Activated T-helper 2 cell treated with anti-CD3 and anti-CD28 coated beads, Interferon-gamma antibody, Interleukin-2, Interleukin-4, amounts not matched to agents 10 μg/mL and 5 μg/mL and 100 μg/mL, durations not matched to agents 14 hours and 24 hours and 36 hours (primary cell): ENCODE measurements at regions of chr3 and their contacts with region 1.

Region 1: DNA sequence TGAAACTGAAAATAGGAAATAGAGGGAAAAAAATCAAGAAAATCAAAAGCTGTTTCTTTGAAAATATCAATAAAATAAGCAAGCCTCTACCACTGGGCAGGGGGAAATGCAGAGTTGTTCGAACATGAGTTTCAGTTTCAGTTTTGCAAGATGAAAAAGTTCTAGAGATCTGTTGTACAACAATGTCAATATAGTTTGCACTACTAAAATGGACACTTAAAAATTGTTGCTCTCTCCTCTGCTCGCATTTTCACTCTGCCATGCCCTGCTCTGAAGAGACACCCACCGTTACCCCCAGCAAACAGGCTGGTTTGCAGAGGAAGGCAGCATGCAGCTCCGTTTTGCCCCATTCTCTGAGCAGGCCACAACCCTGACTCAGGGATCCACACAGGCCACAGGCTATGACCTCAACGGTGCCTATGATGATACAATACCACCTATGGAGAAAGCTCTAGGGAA is 64.5 kb downstream of the ZNF148 start:
- DNase-seq: peak; percentile 43
- H3K4me3 Mint-ChIP-seq: peak overlapping the region; percentile 87
- H3K27ac Mint-ChIP-seq: peak overlapping the region; percentile 88
- H3K4me1 Mint-ChIP-seq: peaks cover 30% of the 10 kb centered on the region
- H3K27me3 Mint-ChIP-seq: no peaks in the 10 kb centered on the region

Region 2: DNA sequence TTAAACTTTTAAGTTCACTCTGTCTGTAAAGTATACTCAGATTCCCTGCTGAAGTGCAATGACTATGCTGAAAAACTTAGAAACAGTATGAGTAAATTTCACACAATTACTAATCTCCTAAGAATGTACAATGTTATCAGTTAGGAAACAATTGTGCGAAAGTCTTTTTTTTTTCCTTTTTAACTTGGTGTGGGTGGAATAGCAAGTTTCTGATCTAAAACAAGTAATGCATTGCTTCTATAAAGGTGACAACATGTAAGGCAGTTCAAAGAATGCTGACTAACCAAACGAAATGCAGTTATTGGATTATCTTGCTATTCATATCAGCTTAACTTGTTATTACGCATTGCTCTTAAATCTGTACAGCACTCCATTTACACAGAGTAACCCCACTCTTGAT is 78.8 kb before region 1 on chr3:
- intact Hi-C with region 1: loop called (anchors 1 kb)
- DNase-seq: no peak
- H3K4me3 Mint-ChIP-seq: no peak overlapping the region
- H3K27ac Mint-ChIP-seq: peak overlapping the region; percentile 60
- H3K4me1 Mint-ChIP-seq: peaks cover 18% of the 10 kb centered on the region
- H3K27me3 Mint-ChIP-seq: no peaks in the 10 kb centered on the region

Region 3: GRCh38 chr3:125271127-125271526 is 39.5 kb before region 1 on chr3:
- intact Hi-C with region 1: loop called (anchors 5 kb)
- DNase-seq: no peak
- H3K4me3 Mint-ChIP-seq: no peak overlapping the region
- H3K27ac Mint-ChIP-seq: no peak overlapping the region
- H3K4me1 Mint-ChIP-seq: peaks cover 16% of the 10 kb centered on the region
- H3K27me3 Mint-ChIP-seq: no peaks in the 10 kb centered on the region

Region 4: GRCh38 chr3:125281386-125281785 is 29.3 kb before region 1 on chr3:
- intact Hi-C with region 1: no loop called
- DNase-seq: no peak
- H3K4me3 Mint-ChIP-seq: no peak overlapping the region
- H3K27ac Mint-ChIP-seq: no peak overlapping the region
- H3K4me1 Mint-ChIP-seq: peaks cover 4% of the 10 kb centered on the region
- H3K27me3 Mint-ChIP-seq: no peaks in the 10 kb centered on the region

Region 5: DNA sequence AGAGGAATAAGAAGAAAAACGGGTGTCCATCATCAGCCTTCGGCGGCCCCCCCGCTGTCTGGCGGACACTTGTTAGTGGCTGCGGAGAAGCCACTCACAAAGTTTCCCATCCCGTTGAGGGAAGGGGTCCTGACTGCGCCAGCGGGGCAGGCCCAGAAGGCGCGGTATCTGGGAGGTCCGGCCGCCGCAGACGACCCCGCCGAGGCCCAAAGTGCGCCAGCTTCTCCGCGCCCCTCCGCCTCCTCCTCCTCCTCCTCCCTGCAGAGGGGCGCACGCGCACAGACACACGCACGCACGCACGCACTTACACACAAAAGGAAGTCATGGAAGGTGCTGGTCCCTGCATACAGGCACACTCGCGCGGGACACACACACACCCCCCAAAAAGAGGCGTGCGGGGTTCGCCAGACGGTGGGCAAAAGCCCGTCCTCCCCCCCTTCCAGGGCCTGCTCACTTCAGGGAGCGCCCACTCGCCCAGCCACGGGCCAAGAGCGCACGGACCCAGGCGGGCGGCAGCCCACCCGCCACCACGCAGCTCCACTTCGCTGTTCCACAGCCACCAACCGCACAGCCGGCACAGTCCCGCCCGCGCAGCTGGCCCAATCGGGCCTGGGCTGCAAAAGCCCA is 46.5 kb after region 1 on chr3:
- intact Hi-C with region 1: loop called (anchors 5 kb)
- DNase-seq: peak; percentile 36
- H3K4me3 Mint-ChIP-seq: peak overlapping the region; percentile 78
- H3K27ac Mint-ChIP-seq: peak overlapping the region; percentile 66
- H3K4me1 Mint-ChIP-seq: peaks cover 43% of the 10 kb centered on the region
- H3K27me3 Mint-ChIP-seq: no peaks in the 10 kb centered on the region

Region 6: GRCh38 chr3:125381743-125382142 is 71.1 kb after region 1 on chr3:
- intact Hi-C with region 1: loop called (anchors 2 kb)
- DNase-seq: peak; percentile 23
- H3K4me3 Mint-ChIP-seq: no peak overlapping the region
- H3K27ac Mint-ChIP-seq: peak overlapping the region; percentile 42
- H3K4me1 Mint-ChIP-seq: peaks cover 16% of the 10 kb centered on the region
- H3K27me3 Mint-ChIP-seq: peaks cover 12% of the 10 kb centered on the region

Region 7: GRCh38 chr3:125608419-125608818 is 297.8 kb after region 1 on chr3:
- intact Hi-C with region 1: no loop called
- DNase-seq: no peak
- H3K4me3 Mint-ChIP-seq: no peak overlapping the region
- H3K27ac Mint-ChIP-seq: no peak overlapping the region
- H3K4me1 Mint-ChIP-seq: peaks cover 2% of the 10 kb centered on the region
- H3K27me3 Mint-ChIP-seq: peaks cover 4% of the 10 kb centered on the region